Dendritic cell treated with granulocyte-macrophage colony-stimulating factor and Interleukin-4, amounts not matched to agents 40 ng/mL and 50 ng/mL, for 4 days (primary cell): ENCODE measurements at regions of chr5 and their contacts with region 1.

Region 1: DNA sequence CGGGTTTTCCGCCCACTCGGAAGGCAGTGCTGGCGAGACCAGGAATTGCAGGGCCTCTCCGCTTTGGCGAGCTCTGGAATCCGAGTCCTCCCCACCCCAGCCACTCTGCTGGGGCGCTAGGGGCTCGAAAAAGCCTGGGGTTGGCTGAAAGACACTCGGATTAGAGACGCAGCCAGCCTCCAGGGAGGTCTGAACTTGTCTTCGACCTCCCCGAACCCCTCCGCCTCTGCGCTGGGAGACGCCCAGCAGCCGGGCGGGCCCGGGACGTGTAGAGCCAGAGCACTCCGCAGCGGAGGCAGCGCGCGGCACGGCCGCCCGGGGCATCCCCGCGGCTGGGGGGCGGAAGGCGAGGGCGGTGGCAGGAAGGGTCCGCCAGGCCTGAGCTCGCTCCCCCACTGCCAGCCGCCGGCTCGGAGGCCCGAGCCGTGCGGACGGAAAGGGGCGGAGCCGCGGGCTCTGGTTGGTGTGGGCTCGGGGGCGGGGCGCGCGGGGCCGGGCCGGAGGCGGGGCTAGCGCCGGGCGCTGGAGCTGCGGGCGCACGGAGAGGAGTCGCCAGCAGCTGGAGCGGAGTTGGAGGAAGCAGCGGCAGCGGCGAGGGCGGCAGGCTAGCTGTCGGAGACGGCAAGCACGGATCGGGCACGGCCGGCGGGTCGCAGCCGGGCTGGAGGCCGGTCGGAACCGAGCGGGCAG is at the start of gene PIK3R1:
- H3K4me3 Mint-ChIP-seq: peak within 1 kb of the TSS; percentile 94
- H3K27ac Mint-ChIP-seq: peak within 1 kb of the TSS; percentile 97
- H3K4me1 Mint-ChIP-seq: peaks cover 39% of the 10 kb centered on the region
- H3K27me3 Mint-ChIP-seq: no peaks in the 10 kb centered on the region

Region 2: GRCh38 chr5:67976891-67977601 is 238.3 kb before region 1 on chr5:
- intact Hi-C with region 1: loop called (anchors 5 kb)
- H3K4me3 Mint-ChIP-seq: no peak overlapping the region
- H3K27ac Mint-ChIP-seq: peak overlapping the region; percentile 75
- H3K4me1 Mint-ChIP-seq: peaks cover 33% of the 10 kb centered on the region
- H3K27me3 Mint-ChIP-seq: no peaks in the 10 kb centered on the region

Region 3: DNA sequence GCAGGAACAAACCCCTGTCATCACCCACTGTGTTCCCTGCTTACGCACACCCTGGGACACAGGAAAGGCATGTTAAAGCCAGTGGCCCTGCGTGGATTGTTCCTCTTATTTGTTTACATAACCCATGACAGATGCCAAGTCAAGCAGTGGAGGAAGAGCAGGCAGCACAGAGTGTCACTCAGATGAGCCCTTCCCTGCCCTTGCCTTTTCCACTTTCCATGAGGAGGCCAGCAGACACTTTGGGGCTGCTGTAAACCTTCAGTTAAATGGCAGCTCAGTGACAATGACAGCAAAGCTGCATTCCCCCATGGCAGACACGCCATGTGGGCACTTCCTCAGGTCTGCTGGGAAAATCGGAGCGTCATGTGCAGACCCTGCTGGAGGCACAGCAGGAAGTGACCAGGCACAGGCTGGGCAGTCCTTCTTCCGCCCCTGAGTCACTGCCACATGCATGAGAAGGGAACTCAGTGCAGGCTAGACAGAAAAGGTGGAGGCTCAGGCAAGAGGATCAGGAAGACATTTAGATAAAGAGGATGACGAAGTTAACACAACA is 216.6 kb before region 1 on chr5:
- intact Hi-C with region 1: loop called (anchors 1 kb)
- H3K4me3 Mint-ChIP-seq: peak overlapping the region; percentile 11
- H3K27ac Mint-ChIP-seq: peak overlapping the region; percentile 91
- H3K4me1 Mint-ChIP-seq: peaks cover 31% of the 10 kb centered on the region
- H3K27me3 Mint-ChIP-seq: no peaks in the 10 kb centered on the region

Region 4: DNA sequence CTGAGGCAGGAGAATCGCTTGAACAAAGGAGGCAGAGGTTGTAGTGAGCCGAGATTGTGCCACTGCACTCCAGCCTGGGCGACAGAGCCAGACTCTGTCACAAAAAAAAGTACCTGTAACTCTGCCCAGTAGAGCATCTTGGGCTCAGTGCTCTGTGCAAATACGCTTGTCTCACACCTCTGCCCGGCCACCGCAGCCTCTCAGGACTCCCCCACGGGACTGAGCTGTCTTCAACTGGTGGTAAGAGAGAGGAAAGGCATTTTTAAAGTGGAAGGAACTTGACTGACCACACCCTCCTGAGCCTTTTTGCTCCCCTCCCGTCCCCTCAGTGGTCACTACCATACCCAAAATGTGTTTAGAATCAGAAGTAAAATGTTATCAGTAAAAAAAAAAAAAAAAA is 174.1 kb before region 1 on chr5:
- intact Hi-C with region 1: loop called (anchors 5 kb)
- H3K4me3 Mint-ChIP-seq: peak overlapping the region; percentile 49
- H3K27ac Mint-ChIP-seq: peak overlapping the region; percentile 84
- H3K4me1 Mint-ChIP-seq: peaks cover 69% of the 10 kb centered on the region
- H3K27me3 Mint-ChIP-seq: no peaks in the 10 kb centered on the region

Region 5: DNA sequence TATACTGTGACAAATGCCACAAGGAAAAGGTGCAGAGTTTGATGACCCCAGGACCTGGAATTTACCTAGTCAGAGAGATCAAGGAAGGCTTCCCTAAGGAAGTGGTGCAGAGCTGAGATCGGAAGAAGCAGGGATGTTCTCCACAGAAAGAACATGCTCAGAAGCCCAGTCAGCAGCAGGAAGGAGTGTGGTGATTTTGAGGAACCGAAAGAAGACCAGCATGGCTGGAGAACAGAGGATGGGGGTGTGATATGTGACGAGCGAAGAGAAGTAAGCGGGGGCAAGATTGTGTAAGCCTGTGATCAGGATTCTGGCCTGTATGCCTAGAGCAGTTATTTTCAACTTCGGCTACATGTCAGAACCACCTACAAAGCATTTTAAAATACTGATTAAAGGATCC is 18.5 kb before region 1 on chr5:
- intact Hi-C with region 1: loop called (anchors 2 kb)
- H3K4me3 Mint-ChIP-seq: no peak overlapping the region
- H3K27ac Mint-ChIP-seq: peak overlapping the region; percentile 70
- H3K4me1 Mint-ChIP-seq: peaks cover 53% of the 10 kb centered on the region
- H3K27me3 Mint-ChIP-seq: no peaks in the 10 kb centered on the region

Region 6: GRCh38 chr5:68252673-68253623 is 37.6 kb after region 1 on chr5:
- intact Hi-C with region 1: loop called (anchors 2 kb)
- H3K4me3 Mint-ChIP-seq: no peak overlapping the region
- H3K27ac Mint-ChIP-seq: peak overlapping the region; percentile 52
- H3K4me1 Mint-ChIP-seq: peaks cover 79% of the 10 kb centered on the region
- H3K27me3 Mint-ChIP-seq: no peaks in the 10 kb centered on the region